ENCODE measurements at regions of chr2 and their contacts with region 1.

Region 1: DNA sequence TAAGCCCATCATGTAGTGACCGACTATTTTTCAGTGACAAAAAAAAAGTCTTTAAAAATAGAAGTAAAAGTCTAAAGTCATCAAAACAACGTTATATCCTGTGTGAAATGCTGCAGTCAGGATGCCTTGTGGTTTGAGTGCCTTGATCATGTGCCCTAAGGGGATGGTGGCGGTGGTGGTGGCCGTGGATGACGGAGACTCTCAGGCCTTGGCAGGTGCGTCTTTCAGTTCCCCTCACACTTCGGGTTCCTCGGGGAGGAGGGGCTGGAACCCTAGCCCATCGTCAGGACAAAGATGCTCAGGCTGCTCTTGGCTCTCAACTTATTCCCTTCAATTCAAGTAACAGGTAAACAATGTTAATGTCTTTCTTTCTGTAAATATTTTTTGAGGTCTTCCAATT is at the start of gene CD28:
- DNase-seq: peak; percentile 68 to 97 (median 93)
- ATAC-seq: peak; percentile 84 to 93 (median 88)
- H3K4me3 ChIP-seq: peak within 1 kb of the TSS; percentile 75 to 88
- H3K4me3 Mint-ChIP-seq: peak within 1 kb of the TSS; percentile 83 to 98 (median 95)
- H3K27ac ChIP-seq: peak within 1 kb of the TSS; percentile 95
- H3K27ac Mint-ChIP-seq: peak within 1 kb of the TSS; percentile 96 to 100
- H3K4me1 ChIP-seq: peaks cover 22 to 31% of the 10 kb centered on the region in 2 experiments
- H3K4me1 Mint-ChIP-seq: peaks cover 51 to 59% (median 55%) of the 10 kb centered on the region in 3 donors
- H3K27me3 ChIP-seq: no peaks in the 10 kb centered on the region
- H3K27me3 Mint-ChIP-seq: no peaks in the 10 kb centered on the region
- total RNA-seq, gene CD28: 112 to 154 (median 151) TPM

Region 2: GRCh38 chr2:203718087-203718486 is 11.7 kb after region 1 on chr2:
- CTCF ChIA-PET with region 1: interaction called, 3 to 53 read pairs
- POLR2A ChIA-PET with region 1: interaction called, 12 to 134 read pairs
- DNase-seq: peak in 32 of 35 experiments; percentile 14 to 71 (median 40)
- ATAC-seq: peak; percentile 47 to 56 (median 55)
- H3K4me3 ChIP-seq: peak overlapping the region; percentile 2 to 17
- H3K4me3 Mint-ChIP-seq: peak overlapping the region; percentile 63 to 83 (median 73)
- H3K27ac ChIP-seq: peak overlapping the region; percentile 75
- H3K27ac Mint-ChIP-seq: peak overlapping the region; percentile 98 to 99
- H3K4me1 ChIP-seq: peaks cover 70 to 88% of the 10 kb centered on the region in 2 experiments
- H3K4me1 Mint-ChIP-seq: peaks cover 96 to 99% (median 98%) of the 10 kb centered on the region in 3 donors
- H3K27me3 ChIP-seq: no peaks in the 10 kb centered on the region
- H3K27me3 Mint-ChIP-seq: no peaks in the 10 kb centered on the region

Region 3: GRCh38 chr2:203740780-203741281 is 34.4 kb after region 1 on chr2:
- CTCF ChIA-PET with region 1: interaction called, 7 to 12 read pairs
- POLR2A ChIA-PET with region 1: interaction called, 19 to 26 read pairs
- DNase-seq: peak in 25 of 35 experiments; percentile 21 to 85 (median 54)
- ATAC-seq: peak; percentile 86 to 90 (median 88)
- H3K4me3 ChIP-seq: peak overlapping the region in 1 of 2 donors; percentile 38
- H3K4me3 Mint-ChIP-seq: peak overlapping the region; percentile 59 to 69 (median 63)
- H3K27ac ChIP-seq: peak overlapping the region; percentile 79
- H3K27ac Mint-ChIP-seq: peak overlapping the region; percentile 90 to 91
- H3K4me1 ChIP-seq: peaks cover 62 to 74% of the 10 kb centered on the region in 2 experiments
- H3K4me1 Mint-ChIP-seq: peaks cover 85 to 91% (median 88%) of the 10 kb centered on the region in 3 donors
- H3K27me3 ChIP-seq: no peaks in the 10 kb centered on the region
- H3K27me3 Mint-ChIP-seq: no peaks in the 10 kb centered on the region

Region 4: DNA sequence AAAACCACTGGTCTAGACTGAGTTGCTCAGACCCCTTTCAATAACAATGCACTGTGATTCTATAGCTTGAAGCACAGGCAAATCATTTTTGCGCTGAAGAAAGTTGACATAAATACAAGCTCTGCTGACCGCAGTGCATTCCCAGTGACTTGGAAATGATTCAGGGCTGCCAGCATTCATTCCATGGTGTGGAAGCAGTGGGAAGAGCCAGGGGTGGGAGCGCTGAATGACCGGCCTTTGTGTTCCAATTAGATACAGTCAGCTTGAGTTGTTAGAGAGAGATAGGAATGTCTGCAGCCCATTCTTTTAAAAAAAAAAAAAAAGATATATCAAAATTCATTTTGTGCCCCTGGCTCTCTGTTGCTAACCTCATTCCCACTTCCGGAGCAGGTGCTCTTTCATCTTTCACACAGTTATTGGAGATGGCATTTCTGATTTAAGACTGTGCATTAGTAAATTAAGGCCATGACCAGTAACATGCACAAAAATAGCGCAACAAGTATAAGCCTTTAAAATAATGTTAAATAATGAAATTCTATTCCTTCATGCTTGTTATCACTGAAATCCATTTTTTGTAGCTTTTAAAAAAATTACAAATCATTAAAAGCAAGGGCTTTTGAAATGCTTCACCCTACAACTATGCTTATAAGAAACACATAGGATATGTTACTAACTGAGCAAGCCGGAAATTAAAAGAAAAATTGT is 101.8 kb after region 1 on chr2:
- CTCF ChIA-PET with region 1: interaction called in 1 of 2 experiments, 6 read pairs
- POLR2A ChIA-PET with region 1: interaction called in 1 of 2 experiments, 13 read pairs
- DNase-seq: no peak
- ATAC-seq: no peak
- H3K4me3 ChIP-seq: no peak overlapping the region
- H3K4me3 Mint-ChIP-seq: no peak overlapping the region
- H3K27ac ChIP-seq: no peak overlapping the region
- H3K27ac Mint-ChIP-seq: peak overlapping the region in 1 of 2 donors; percentile 71
- H3K4me1 ChIP-seq: peaks cover 35 to 38% of the 10 kb centered on the region in 2 experiments
- H3K4me1 Mint-ChIP-seq: peaks cover 64 to 82% (median 79%) of the 10 kb centered on the region in 3 donors
- H3K27me3 ChIP-seq: no peaks in the 10 kb centered on the region
- H3K27me3 Mint-ChIP-seq: no peaks in the 10 kb centered on the region

Region 5: GRCh38 chr2:203814661-203815540 is 108.5 kb after region 1 on chr2:
- CTCF ChIA-PET with region 1: interaction called in 1 of 2 experiments, 11 read pairs
- POLR2A ChIA-PET with region 1: interaction called in 1 of 2 experiments, 4 read pairs
- DNase-seq: peak in 33 of 35 experiments; percentile 27 to 82 (median 40)
- ATAC-seq: peak; percentile 76 to 95 (median 83)
- H3K4me3 ChIP-seq: peak overlapping the region in 1 of 2 donors; percentile 29
- H3K4me3 Mint-ChIP-seq: peak overlapping the region in 2 of 3 donors; percentile 61 to 64
- H3K27ac ChIP-seq: no peak overlapping the region
- H3K27ac Mint-ChIP-seq: peak overlapping the region; percentile 68 to 81
- H3K4me1 ChIP-seq: peaks cover 19 to 26% of the 10 kb centered on the region in 2 experiments
- H3K4me1 Mint-ChIP-seq: peaks cover 37 to 50% (median 48%) of the 10 kb centered on the region in 3 donors
- H3K27me3 ChIP-seq: no peaks in the 10 kb centered on the region
- H3K27me3 Mint-ChIP-seq: no peaks in the 10 kb centered on the region

Region 6: DNA sequence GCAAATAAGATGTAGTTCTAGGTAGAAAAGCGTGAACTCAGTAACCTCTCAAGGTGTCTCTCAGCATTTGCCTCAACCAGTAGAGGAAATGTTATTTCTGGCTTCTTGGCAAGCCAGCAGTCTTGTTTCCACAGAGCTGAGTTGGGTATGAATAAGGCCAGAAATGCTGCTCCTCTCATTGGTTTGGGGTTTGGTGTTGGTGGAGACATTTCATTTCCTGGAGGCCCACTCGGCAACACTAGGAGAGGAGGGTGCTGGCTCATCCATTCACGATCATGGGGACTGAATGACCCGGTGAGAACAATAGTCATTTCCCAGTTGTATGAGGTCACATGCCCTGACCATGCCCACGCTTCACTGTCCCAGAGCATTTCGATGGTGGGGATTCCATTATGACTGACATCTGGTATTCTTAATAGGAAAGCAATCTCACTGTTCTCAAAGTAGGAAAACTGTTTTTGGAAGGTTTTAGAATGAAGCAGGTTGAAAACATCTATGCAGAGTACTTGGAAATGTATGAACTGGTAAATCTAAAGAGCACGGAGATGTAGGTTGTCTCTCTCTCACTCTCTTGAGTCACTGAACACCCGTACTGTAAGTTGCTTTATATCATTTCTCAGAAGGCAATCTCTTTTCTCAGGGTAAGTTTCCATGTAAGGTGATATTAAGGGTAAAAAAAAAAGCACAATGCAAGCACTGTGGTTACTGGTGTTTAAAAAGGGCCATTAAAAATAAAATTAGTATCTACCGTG is 124.1 kb after region 1 on chr2:
- CTCF ChIA-PET with region 1: no interaction called
- POLR2A ChIA-PET with region 1: no interaction called
- DNase-seq: no peak
- ATAC-seq: peak in 3 of 4 experiments; percentile 14 to 67 (median 57)
- H3K4me3 ChIP-seq: no peak overlapping the region
- H3K4me3 Mint-ChIP-seq: no peak overlapping the region
- H3K27ac ChIP-seq: no peak overlapping the region
- H3K27ac Mint-ChIP-seq: peak overlapping the region; percentile 44 to 63
- H3K4me1 ChIP-seq: peaks cover 0 to 4% of the 10 kb centered on the region in 2 experiments
- H3K4me1 Mint-ChIP-seq: peaks cover 0 to 17% (median 14%) of the 10 kb centered on the region in 3 donors
- H3K27me3 ChIP-seq: no peaks in the 10 kb centered on the region
- H3K27me3 Mint-ChIP-seq: no peaks in the 10 kb centered on the region